Transverse colon (tissue), 4 donors: ENCODE measurements at regions of chr13 and their contacts with region 1.

Region 1: GRCh38 chr13:110915057-110915873 is at the start of gene ANKRD10:
- DNase-seq: peak; percentile 99
- H3K4me3 ChIP-seq: peak within 1 kb of the TSS; percentile 79 to 96 (median 86)
- H3K27ac ChIP-seq: peak within 1 kb of the TSS; percentile 98 to 100 (median 100)
- H3K4me1 ChIP-seq: peaks cover 14 to 43% (median 39%) of the 10 kb centered on the region in 4 donors
- H3K27me3 ChIP-seq: no peaks in the 10 kb centered on the region
- CTCF ChIP-seq: peak; percentile 75 to 96 (median 84)
- EP300 ChIP-seq: peak; percentile 8
- POLR2A ChIP-seq: peak; percentile 56
- total RNA-seq, gene ANKRD10: 124 to 286 (median 188) TPM

Region 2: DNA sequence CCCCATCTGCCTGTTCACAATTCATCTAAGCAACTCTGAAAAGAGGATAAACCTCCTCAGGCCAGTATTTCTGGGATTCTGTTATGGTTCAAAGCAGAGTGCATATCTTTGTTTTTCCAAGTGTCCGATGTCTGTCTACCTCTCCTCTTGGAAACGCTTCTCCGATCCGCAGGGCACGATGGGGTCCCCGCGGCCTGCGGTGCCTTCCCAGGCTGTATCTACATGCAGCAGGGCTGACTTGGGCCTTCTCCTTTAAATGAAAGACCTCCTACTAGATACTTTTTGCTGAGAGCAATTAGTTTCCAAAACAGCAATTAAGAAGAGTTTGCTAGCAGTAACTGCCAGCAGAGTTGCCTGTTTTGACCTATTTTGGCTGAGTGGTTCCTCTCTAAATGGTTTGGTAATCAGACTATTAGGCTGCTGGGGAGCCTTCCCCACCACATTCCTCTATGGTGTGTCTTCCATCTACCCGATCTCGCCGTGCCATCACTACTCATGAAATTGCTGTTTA is 584.7 kb before region 1 on chr13:
- in situ Hi-C with region 1: no loop called
- intact Hi-C with region 1: loop called (anchors 5 kb)
- DNase-seq: no peak
- H3K4me3 ChIP-seq: no peak overlapping the region
- H3K27ac ChIP-seq: peak overlapping the region; percentile 84 to 87 (median 86)
- H3K4me1 ChIP-seq: peaks cover 0 to 34% (median 11%) of the 10 kb centered on the region in 4 donors
- H3K27me3 ChIP-seq: no peaks in the 10 kb centered on the region
- CTCF ChIP-seq: no peak
- EP300 ChIP-seq: no peak
- POLR2A ChIP-seq: no peak

Region 3: GRCh38 chr13:110715395-110716235 is 199.7 kb before region 1 on chr13:
- in situ Hi-C with region 1: loop called in 2 of 4 experiments (anchors 25 kb)
- intact Hi-C with region 1: loop called (anchors 5 kb)
- DNase-seq: peak; percentile 98
- H3K4me3 ChIP-seq: peak overlapping the region; percentile 47 to 92 (median 85)
- H3K27ac ChIP-seq: peak overlapping the region; percentile 99 to 100 (median 100)
- H3K4me1 ChIP-seq: peaks cover 11 to 34% (median 30%) of the 10 kb centered on the region in 4 donors
- H3K27me3 ChIP-seq: no peaks in the 10 kb centered on the region
- CTCF ChIP-seq: peak in 2 of 5 experiments; percentile 20 to 46
- EP300 ChIP-seq: no peak
- POLR2A ChIP-seq: no peak

Region 4: GRCh38 chr13:111046590-111047141 is 131.4 kb after region 1 on chr13:
- in situ Hi-C with region 1: no loop called
- intact Hi-C with region 1: loop called (anchors 10 kb)
- DNase-seq: no peak
- H3K4me3 ChIP-seq: no peak overlapping the region
- H3K27ac ChIP-seq: peak overlapping the region in 1 of 4 donors; percentile 28
- H3K4me1 ChIP-seq: peaks cover 0 to 3% (median 2%) of the 10 kb centered on the region in 4 donors
- H3K27me3 ChIP-seq: no peaks in the 10 kb centered on the region
- CTCF ChIP-seq: peak in 3 of 5 experiments; percentile 15 to 19 (median 17)
- EP300 ChIP-seq: no peak
- POLR2A ChIP-seq: no peak

Region 5: GRCh38 chr13:111153279-111153976 is 238.2 kb after region 1 on chr13:
- in situ Hi-C with region 1: no loop called
- intact Hi-C with region 1: loop called (anchors 10 kb)
- DNase-seq: peak; percentile 94
- H3K4me3 ChIP-seq: peak overlapping the region; percentile 67 to 95 (median 78)
- H3K27ac ChIP-seq: peak overlapping the region; percentile 97 to 99 (median 99)
- H3K4me1 ChIP-seq: peaks cover 15 to 30% (median 20%) of the 10 kb centered on the region in 4 donors
- H3K27me3 ChIP-seq: no peaks in the 10 kb centered on the region
- CTCF ChIP-seq: peak in 2 of 5 experiments; percentile 9 to 43
- EP300 ChIP-seq: no peak
- POLR2A ChIP-seq: peak; percentile 93

Region 6: GRCh38 chr13:111202745-111203144 is 287.5 kb after region 1 on chr13:
- in situ Hi-C with region 1: loop called in 1 of 4 experiments (anchors 25 kb)
- intact Hi-C with region 1: no loop called
- DNase-seq: no peak
- H3K4me3 ChIP-seq: no peak overlapping the region
- H3K27ac ChIP-seq: peak overlapping the region in 3 of 4 donors; percentile 30 to 48 (median 48)
- H3K4me1 ChIP-seq: peaks cover 3 to 42% (median 15%) of the 10 kb centered on the region in 4 donors
- H3K27me3 ChIP-seq: no peaks in the 10 kb centered on the region
- CTCF ChIP-seq: no peak
- EP300 ChIP-seq: no peak
- POLR2A ChIP-seq: no peak

Region 7: DNA sequence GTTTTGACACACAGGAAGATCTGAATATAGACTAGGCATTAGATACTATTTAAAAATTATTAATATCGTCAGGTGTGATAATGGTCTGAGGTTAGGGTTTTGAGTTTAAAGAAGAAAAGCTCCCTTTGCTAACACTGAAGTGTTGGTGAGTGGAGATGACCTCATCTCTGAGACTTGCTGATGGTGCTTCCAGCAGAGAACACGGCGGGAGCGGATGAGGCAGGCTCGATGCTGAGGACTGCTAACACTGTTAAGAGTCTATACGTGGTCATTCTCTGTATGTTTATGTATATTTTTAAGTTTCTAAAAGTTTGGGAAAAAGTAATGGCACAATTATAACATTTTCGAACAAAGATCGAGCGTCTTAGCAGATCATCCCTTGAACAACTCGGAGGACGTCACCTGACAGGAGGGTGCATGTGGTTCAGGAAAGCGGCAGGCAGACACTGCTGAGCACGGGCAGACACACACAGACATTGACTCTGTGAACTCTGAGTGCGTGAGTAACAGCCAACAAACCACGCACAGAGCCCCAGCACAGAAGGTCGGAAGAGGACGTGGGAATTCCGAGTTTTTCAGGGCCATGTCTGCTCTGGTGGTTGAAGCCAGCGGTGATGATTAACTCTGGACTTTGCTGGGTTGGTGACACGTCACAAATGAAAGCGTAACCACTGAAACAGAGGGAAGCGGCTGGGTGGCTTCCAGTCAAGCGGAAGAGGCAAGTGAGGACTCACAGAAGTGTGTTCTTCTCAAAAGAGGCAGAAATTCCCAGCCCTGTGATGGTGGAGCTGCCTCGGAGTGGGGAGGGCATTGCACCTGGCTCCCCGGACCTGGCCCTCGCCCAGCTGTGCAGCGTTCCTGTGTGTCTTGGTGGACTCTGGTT is 313.2 kb after region 1 on chr13:
- in situ Hi-C with region 1: loop called in 2 of 4 experiments (anchors 25 kb)
- intact Hi-C with region 1: no loop called
- DNase-seq: no peak
- H3K4me3 ChIP-seq: no peak overlapping the region
- H3K27ac ChIP-seq: no peak overlapping the region
- H3K4me1 ChIP-seq: peaks cover 0 to 7% (median 2%) of the 10 kb centered on the region in 4 donors
- H3K27me3 ChIP-seq: no peaks in the 10 kb centered on the region
- CTCF ChIP-seq: no peak
- EP300 ChIP-seq: no peak
- POLR2A ChIP-seq: no peak